ENCODE measurements at regions of chr7 and their contacts with region 1.

Region 1: DNA sequence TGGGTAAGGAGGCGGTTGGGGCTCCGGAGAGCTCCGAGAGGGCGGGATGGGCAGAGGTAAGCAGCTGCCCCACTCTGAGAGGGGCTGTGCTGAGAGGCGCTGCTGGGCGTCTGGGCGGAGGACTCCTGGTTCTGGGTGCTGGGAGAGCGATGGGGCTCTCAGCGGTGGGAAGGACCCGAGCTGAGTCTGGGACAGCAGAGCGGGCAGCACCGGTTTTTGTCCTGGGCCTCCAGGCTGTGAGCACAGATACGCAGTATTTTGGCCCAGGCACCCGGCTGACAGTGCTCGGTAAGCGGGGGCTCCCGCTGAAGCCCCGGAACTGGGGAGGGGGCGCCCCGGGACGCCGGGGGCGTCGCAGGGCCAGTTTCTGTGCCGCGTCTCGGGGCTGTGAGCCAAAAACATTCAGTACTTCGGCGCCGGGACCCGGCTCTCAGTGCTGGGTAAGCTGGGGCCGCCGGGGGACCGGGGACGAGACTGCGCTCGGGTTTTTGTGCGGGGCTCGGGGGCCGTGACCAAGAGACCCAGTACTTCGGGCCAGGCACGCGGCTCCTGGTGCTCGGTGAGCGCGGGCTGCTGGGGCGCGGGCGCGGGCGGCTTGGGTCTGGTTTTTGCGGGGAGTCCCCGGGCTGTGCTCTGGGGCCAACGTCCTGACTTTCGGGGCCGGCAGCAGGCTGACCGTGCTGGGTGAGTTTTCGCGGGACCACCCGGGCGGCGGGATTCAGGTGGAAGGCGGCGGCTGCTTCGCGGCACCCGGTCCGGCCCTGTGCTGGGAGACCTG is 26.0 kb downstream of the PRSS2 start:
- DNase-seq: no peak
- H3K4me3 Mint-ChIP-seq: peak overlapping the region; percentile 99
- H3K27ac Mint-ChIP-seq: peak overlapping the region; percentile 89
- H3K4me1 Mint-ChIP-seq: peaks cover 70% of the 10 kb centered on the region
- H3K27me3 Mint-ChIP-seq: no peaks in the 10 kb centered on the region

Region 2: DNA sequence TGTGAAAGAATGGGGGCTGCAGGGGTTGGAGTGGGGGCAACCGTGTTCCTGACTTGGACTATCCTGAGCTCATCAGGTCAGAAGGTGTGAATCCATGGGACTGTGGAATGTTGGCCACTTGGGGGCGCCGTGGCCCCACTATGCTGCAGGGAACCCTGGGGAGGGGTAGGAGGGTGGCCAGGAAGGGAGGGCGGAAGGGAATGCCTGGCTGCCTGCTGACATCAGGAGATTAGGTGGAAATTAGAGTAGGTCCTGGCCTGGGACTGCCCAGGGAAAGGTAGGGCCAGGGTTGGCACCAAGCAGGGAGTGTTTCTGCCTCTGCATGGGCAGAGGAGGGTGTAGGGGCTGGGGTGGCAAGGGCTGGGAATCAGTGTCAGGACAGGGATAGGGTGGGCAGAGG is 473.1 kb before region 1 on chr7:
- CTCF ChIA-PET with region 1: no interaction called
- POLR2A ChIA-PET with region 1: interaction called, 45 read pairs
- DNase-seq: peak; percentile 48
- H3K4me3 Mint-ChIP-seq: no peak overlapping the region
- H3K27ac Mint-ChIP-seq: no peak overlapping the region
- H3K4me1 Mint-ChIP-seq: peaks cover 19% of the 10 kb centered on the region
- H3K27me3 Mint-ChIP-seq: peaks cover 10% of the 10 kb centered on the region

Region 3: DNA sequence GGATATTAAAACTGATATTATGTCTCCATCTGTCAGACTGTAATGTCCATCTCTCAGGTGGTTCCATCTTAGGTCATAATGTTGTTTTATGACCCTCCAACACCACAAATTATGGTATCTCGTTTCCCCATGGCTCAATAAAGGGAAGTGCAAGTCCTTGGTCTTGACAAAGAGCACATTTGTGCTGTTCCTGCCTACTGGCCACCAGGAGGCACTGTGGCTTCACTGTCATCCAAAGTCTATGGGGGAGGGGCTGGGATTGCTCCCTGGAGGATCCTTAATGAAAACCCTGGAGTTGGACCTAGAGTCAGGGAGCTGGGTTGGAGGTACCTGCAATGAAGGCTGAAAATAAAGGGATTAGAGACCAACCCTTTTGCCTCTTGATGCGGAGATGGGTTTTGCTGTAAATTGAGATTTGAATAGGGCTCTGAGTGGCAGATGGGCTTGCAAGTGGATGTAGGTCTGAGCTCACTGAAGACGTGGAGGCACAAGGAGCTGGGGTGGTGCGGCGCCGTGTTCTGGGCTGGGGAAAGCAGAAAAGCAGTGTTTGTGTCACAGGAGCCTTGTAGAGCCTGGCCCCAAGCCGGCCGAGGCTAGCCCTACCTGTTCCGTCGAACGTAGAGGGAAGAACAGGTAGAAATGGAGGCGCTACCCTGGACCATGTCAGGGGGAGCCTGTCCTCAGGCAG is 358.4 kb before region 1 on chr7:
- CTCF ChIA-PET with region 1: no interaction called
- POLR2A ChIA-PET with region 1: interaction called, 15 read pairs
- DNase-seq: peak; percentile 43
- H3K4me3 Mint-ChIP-seq: no peak overlapping the region
- H3K27ac Mint-ChIP-seq: no peak overlapping the region
- H3K4me1 Mint-ChIP-seq: peaks cover 66% of the 10 kb centered on the region
- H3K27me3 Mint-ChIP-seq: no peaks in the 10 kb centered on the region

Region 4: GRCh38 chr7:142615508-142615907 is 181.3 kb before region 1 on chr7:
- CTCF ChIA-PET with region 1: interaction called, 3 read pairs
- POLR2A ChIA-PET with region 1: interaction called, 11 read pairs
- DNase-seq: no peak
- H3K4me3 Mint-ChIP-seq: peak overlapping the region; percentile 61
- H3K27ac Mint-ChIP-seq: peak overlapping the region; percentile 73
- H3K4me1 Mint-ChIP-seq: peaks cover 23% of the 10 kb centered on the region
- H3K27me3 Mint-ChIP-seq: peaks cover 10% of the 10 kb centered on the region

Region 5: DNA sequence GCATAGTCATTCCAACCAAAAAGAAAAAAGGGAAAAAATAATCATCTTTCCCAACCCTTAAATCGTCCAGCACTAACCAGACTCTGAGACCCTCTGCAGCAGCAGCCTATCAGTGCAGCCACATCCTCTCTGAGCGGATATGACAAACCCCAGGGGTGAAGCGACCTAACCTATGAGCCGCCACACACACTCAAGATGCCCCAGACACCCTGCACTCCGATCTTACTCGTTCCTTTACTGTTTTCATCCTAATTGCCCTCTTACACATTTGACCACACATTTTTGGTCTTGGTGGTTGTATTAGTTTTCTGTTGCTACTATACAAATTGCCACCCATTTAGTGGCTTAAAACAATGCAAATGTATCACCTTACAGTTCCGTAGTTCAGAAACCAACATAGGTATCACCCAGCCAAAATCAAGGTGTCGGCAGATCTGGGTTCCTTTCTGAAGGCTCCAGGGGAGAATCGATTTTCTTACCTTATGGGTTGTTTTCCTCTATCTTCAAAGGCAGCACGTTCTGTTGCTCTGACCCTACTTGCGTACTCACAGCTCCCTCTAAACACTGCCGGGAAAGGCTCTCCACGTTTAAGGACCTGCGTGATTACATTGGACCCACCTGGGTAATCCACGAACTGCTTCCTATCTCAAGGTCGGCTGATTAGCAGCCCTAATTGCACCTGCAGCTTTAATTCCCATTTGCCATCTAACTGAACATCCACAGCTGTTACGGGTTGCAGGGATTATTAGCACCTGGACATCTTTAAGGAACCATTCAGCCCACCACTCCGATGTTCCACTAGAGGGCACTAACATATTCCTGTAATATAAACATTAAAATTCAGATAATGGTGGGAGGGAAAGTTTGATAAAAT is 84.8 kb before region 1 on chr7:
- CTCF ChIA-PET with region 1: interaction called, 3 read pairs
- POLR2A ChIA-PET with region 1: interaction called, 29 read pairs
- DNase-seq: peak; percentile 53
- H3K4me3 Mint-ChIP-seq: peak overlapping the region; percentile 68
- H3K27ac Mint-ChIP-seq: peak overlapping the region; percentile 89
- H3K4me1 Mint-ChIP-seq: peaks cover 83% of the 10 kb centered on the region
- H3K27me3 Mint-ChIP-seq: no peaks in the 10 kb centered on the region